ENCODE measurements at regions of chr7 and their contacts with region 1.

Region 1: DNA sequence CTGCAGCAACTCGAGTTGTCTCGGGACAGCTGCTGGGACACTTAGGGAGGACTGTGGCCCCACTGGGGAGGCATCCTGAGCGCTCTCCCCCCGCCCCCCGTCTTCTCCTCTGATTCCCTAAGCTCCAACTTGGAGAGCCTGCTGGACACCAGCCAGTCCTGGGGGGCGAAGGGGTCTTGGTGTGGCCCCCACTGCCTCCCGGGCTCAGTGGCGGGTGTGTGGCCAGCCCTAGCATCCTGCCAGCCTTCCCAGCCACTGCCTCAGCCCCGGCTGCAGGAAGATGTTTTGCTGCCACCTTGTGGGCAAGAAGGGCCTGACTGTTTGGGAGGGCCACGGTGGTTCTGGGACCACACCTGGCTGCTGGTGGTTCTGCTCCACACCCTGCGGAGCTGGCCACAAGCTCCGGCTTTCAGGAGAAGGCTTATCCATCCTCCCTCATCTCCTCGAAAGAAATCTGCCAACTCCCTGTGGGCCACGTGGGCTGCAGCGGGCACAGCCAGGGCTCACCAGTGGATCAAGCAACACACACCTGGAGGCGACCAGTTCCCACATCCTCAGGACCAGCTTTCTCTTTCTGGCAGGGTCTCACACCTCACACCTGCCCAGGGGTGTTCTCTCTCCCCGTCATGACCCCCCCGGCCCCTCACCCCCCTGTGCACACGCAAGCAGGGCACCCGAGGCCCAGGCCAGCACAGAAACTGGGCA is 24.8 kb downstream of the AGAP3 start:
- DNase-seq: peak; percentile 65
- H3K4me3 ChIP-seq: no peak overlapping the region
- H3K27ac ChIP-seq: no peak overlapping the region
- H3K4me1 ChIP-seq: peaks cover 19% of the 10 kb centered on the region
- H3K27me3 ChIP-seq: no peaks in the 10 kb centered on the region
- CTCF ChIP-seq: peak; percentile 85 to 91
- POLR2A ChIP-seq: no peak

Region 2: GRCh38 chr7:150898475-150899011 is 212.6 kb before region 1 on chr7:
- CTCF ChIA-PET with region 1: interaction called, 3 read pairs
- POLR2A ChIA-PET with region 1: no interaction called
- dilution Hi-C with region 1: no loop called
- intact Hi-C with region 1: loop called (anchors 2 kb)
- DNase-seq: peak; percentile 57
- H3K4me3 ChIP-seq: no peak overlapping the region
- H3K27ac ChIP-seq: no peak overlapping the region
- H3K4me1 ChIP-seq: no peaks in the 10 kb centered on the region
- H3K27me3 ChIP-seq: peaks cover 5 to 6% of the 10 kb centered on the region in 2 experiments
- CTCF ChIP-seq: peak; percentile 94 to 97
- POLR2A ChIP-seq: no peak

Region 3: DNA sequence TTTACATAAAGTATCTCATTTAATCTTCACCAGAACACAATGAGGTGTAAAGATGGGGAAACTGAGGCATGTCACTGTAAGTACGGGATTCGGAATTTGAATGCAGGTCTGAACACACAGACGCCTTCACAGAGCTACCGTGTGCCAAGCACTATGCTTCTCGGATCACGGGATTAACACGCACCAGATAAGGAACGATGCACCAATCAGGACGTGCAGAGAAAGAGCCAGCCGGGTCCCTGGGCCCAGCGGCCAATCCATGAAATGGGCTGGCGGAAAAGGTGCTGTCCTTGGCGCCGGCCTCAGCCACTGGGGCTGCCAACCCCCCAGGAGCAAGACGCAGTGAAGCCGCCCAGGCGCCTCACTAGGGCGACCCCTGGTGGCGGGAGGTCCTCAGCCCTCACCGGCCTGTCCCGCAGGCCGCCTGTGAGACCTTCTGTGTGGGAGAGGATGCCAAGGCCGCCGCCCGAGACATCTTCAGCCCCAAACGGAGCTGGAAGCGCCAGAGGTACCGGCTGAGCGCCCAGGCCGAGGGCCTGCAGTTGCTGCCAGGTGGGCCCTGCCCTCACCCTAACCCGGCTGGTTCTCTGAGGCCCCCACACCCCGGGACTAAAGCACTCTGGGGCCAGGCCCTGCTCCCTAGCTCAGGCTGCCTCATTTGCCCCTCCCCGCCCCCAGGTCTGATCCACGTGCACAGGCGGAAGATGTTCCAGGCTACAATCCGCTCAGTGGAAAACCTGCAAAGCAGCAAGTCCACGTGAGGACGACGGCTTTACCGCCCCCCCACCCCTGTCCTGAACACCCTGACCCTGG is 102.4 kb before region 1 on chr7:
- CTCF ChIA-PET with region 1: interaction called, 3 read pairs
- POLR2A ChIA-PET with region 1: no interaction called
- dilution Hi-C with region 1: no loop called
- intact Hi-C with region 1: loop called (anchors 1 kb)
- DNase-seq: peak; percentile 62
- H3K4me3 ChIP-seq: no peak overlapping the region
- H3K27ac ChIP-seq: peak overlapping the region; percentile 23
- H3K4me1 ChIP-seq: peaks cover 44% of the 10 kb centered on the region
- H3K27me3 ChIP-seq: no peaks in the 10 kb centered on the region
- CTCF ChIP-seq: peak; percentile 96 to 98
- POLR2A ChIP-seq: peak; percentile 49

Region 4: DNA sequence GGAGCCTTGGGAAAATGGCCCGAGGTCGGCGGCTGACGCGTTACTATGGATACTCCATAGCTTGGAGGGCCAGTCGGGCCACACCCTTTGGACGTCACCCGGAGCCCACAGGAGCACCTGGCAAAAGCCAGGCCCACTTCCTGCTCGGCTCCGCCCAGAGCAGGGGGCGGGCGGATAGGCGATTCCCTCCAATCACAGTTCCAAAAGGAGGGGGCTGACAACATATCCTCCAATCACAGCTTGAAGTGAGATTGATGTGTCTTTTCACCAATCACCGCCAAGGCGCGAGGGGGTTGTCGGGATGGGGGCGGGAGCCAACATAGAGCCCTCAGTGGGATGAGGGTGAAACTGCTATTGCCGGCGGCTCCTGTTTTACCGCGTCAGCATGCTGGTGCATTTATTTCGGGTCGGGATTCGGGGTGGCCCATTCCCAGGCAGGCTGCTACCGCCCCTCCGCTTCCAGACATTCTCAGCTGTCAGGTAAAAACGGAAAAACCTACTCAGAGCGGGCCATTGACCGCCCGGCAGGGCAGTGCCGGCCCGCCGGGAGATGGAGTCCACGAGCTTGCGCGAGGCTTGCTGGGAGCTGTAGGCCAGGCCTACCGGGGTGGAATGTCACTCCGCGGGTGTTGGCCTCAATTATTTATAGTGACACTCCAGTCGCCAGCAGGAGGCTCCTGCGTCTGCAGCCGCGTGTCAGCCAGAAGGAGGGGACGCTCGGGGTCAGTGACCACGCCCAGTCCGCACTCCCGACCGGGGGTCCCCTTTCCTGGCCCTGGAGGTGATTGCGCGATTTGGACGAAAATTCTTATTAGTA is 82.8 kb before region 1 on chr7 and contains the start of gene ABCB8:
- CTCF ChIA-PET with region 1: interaction called, 23 read pairs
- POLR2A ChIA-PET with region 1: no interaction called
- dilution Hi-C with region 1: no loop called
- intact Hi-C with region 1: loop called (anchors 1 kb)
- DNase-seq: peak; percentile 99
- H3K4me3 ChIP-seq: peak within 1 kb of the TSS; percentile 66 to 88 (median 83)
- H3K27ac ChIP-seq: peak within 1 kb of the TSS; percentile 57
- H3K4me1 ChIP-seq: peaks cover 13% of the 10 kb centered on the region
- H3K27me3 ChIP-seq: no peaks in the 10 kb centered on the region
- CTCF ChIP-seq: peak; percentile 32 to 49
- POLR2A ChIP-seq: peak; percentile 73
- total RNA-seq, gene ABCB8: 46.3 and 48.5 TPM in 2 replicates

Region 5: DNA sequence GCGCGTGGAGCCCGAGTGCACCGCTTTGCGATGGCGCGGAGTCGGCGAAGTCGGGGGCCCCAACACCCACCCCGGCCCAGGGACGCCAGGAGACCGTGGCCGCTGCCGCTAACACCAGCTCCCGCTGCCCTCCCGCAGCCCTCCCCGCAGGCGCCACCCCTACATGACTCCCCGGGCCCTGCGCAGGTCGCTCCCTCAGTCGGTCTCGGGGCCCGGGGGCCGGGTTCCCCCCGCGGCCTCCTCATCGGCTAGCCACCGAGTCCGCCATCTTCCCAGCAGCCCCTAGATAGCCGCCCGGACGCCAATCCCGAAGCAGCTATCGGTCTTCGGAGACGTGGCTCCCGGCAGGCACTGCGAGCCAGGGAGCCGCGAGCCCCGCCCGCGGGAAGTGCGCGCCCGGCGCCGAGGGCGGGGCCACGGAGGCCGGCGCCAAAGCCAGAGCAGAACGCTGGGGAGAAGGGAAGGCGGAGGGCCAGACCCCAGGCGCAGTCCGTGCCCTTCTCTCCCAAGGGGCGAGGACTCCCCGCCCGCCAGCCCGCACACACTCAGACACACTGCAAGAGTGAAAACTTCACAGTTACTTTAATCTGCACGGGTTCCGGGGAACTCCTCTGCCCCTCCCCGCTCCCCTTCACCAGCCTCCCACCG is 30.4 kb before region 1 on chr7 and contains the start of gene FASTK:
- CTCF ChIA-PET with region 1: interaction called, 16 read pairs
- POLR2A ChIA-PET with region 1: interaction called, 4 read pairs
- dilution Hi-C with region 1: no loop called
- intact Hi-C with region 1: loop called (anchors 1 kb)
- DNase-seq: peak; percentile 91
- H3K4me3 ChIP-seq: peak within 1 kb of the TSS; percentile 29 to 75 (median 53)
- H3K27ac ChIP-seq: peak within 1 kb of the TSS; percentile 53
- H3K4me1 ChIP-seq: peaks cover 39% of the 10 kb centered on the region
- H3K27me3 ChIP-seq: no peaks in the 10 kb centered on the region
- CTCF ChIP-seq: no peak
- POLR2A ChIP-seq: peak; percentile 84
- total RNA-seq, gene FASTK: 71.6 and 73.3 TPM in 2 replicates

Region 6: DNA sequence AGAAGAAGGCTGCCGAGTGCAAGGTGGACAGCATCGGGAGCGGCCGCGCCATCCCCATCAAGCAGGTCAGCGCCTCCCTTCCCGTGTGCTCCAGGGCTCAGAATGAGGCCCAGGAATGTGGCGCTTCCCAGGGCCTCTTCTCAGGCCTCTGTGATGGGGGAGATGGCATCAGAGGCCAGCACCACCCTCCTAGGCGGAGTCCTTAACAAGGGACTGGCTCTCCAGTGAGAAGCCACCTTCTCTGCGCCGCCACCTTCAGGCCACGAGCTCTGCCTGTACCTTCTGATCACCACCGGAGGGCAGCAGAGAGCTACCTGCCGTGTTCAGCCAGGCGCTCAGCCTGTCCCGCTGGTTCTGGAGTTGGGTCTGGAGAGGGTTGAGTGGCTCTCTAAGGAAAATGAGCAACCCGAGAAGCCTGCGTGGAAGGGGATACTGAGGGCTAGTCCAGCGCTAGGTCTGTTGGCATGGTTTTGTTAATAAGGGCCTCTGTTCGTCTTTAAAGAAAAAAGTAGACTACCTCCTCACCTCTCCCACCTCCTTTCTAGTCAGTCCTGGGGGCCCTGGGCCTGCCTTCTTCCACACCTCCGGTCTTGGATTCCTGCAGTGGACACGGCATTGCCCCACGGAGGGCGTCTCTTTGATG is 12.8 kb after region 1 on chr7:
- CTCF ChIA-PET with region 1: interaction called, 33 read pairs
- POLR2A ChIA-PET with region 1: no interaction called
- dilution Hi-C with region 1: no loop called
- intact Hi-C with region 1: no loop called
- DNase-seq: peak; percentile 74
- H3K4me3 ChIP-seq: no peak overlapping the region
- H3K27ac ChIP-seq: no peak overlapping the region
- H3K4me1 ChIP-seq: peaks cover 6% of the 10 kb centered on the region
- H3K27me3 ChIP-seq: no peaks in the 10 kb centered on the region
- CTCF ChIP-seq: peak; percentile 98 to 99
- POLR2A ChIP-seq: no peak

Measured in endothelial cell of umbilical vein (primary cell).